ENCODE measurements at regions of chr1 and their contacts with region 1.

Region 1: GRCh38 chr1:152001391-152002249 is 8.0 kb upstream of the S100A10 start:
- DNase-seq: no peak
- ATAC-seq: peak; percentile 82
- H3K4me3 ChIP-seq: no peak overlapping the region
- H3K27ac ChIP-seq: no peak overlapping the region
- H3K4me1 ChIP-seq: no peaks in the 10 kb centered on the region
- H3K27me3 ChIP-seq: peaks cover 1 to 6% of the 10 kb centered on the region in 2 experiments
- CTCF ChIP-seq: peak; percentile 90 to 94 (median 90)
- EP300 ChIP-seq: no peak
- POLR2A ChIP-seq: no peak
- RAD21 ChIP-seq: peak; percentile 88

Region 2: DNA sequence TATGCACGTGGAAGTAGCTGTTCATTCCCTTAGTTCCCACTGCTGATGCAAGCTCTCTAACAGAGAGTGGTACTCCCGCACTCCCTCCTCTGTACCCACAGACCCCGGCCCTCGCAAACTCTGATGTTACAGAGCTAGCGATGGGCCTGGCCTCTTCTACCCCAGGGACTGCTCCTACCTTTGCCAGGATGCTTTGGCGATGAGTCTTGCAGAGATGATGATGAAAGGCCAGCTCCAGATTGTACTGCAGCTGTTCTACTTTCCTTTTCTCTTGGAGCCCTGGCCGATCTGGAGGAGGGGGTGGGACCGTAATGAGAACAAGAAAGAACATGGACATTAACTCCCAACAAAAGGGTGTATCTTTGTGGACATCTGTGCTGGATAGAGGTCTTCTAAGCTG is 190.5 kb before region 1 on chr1:
- CTCF ChIA-PET with region 1: no interaction called
- POLR2A ChIA-PET with region 1: no interaction called
- RAD21 ChIA-PET with region 1: no interaction called
- SMC1A ChIA-PET with region 1: no interaction called
- in situ Hi-C with region 1: no loop called
- intact Hi-C with region 1: no loop called
- DNase-seq: no peak
- ATAC-seq: no peak
- H3K4me3 ChIP-seq: no peak overlapping the region
- H3K27ac ChIP-seq: no peak overlapping the region
- H3K4me1 ChIP-seq: no peaks in the 10 kb centered on the region
- H3K27me3 ChIP-seq: peaks cover 0 to 4% of the 10 kb centered on the region in 2 experiments; a peak in 3 of 4 replicates
- CTCF ChIP-seq: no peak
- EP300 ChIP-seq: no peak
- POLR2A ChIP-seq: no peak
- RAD21 ChIP-seq: no peak

Region 3: DNA sequence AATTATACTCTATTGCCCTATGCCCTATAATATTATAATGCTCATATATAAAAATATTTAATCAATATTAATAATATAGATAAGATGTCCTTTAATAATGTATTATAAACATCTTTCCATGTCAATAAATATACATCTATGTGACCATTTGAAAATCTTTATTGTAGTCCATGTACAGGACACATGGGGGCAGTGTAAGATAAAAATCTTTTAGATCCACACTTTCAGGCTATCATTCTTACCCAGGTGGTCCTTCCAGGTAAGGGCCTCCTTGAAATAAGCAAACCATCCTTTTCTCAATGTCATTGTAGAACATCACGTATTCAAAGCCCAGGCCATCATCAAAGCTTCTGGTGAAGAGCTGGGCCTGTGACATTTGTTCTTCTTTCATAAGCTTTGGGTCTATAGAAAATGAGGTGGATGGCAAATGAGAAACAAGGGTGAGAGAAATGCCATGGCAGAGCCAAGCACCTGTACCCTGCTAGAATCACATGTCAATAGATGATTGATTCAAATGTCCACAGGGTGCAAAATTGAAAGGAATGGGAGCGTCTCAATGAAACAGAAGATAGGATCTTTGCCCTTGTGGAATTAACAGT is 112.5 kb before region 1 on chr1:
- CTCF ChIA-PET with region 1: interaction called, 34 read pairs
- POLR2A ChIA-PET with region 1: no interaction called
- RAD21 ChIA-PET with region 1: interaction called, 6 read pairs
- SMC1A ChIA-PET with region 1: interaction called, 47 read pairs
- in situ Hi-C with region 1: loop called (anchors 5 kb)
- intact Hi-C with region 1: loop called (anchors 1 kb)
- DNase-seq: no peak
- ATAC-seq: peak; percentile 61
- H3K4me3 ChIP-seq: no peak overlapping the region
- H3K27ac ChIP-seq: no peak overlapping the region
- H3K4me1 ChIP-seq: no peaks in the 10 kb centered on the region
- H3K27me3 ChIP-seq: no peaks in the 10 kb centered on the region
- CTCF ChIP-seq: peak; percentile 21 to 43 (median 42); a peak in 4 of 6 replicates
- EP300 ChIP-seq: no peak
- POLR2A ChIP-seq: no peak
- RAD21 ChIP-seq: peak; percentile 50

Region 4: GRCh38 chr1:151909150-151910149 is 92.2 kb before region 1 on chr1 and contains the start of gene THEM4:
- CTCF ChIA-PET with region 1: interaction called, 31 read pairs
- POLR2A ChIA-PET with region 1: no interaction called
- RAD21 ChIA-PET with region 1: interaction called, 8 read pairs
- SMC1A ChIA-PET with region 1: interaction called, 5 read pairs
- in situ Hi-C with region 1: no loop called
- intact Hi-C with region 1: no loop called
- DNase-seq: peak; percentile 79
- ATAC-seq: peak; percentile 99
- H3K4me3 ChIP-seq: peak within 1 kb of the TSS; percentile 84
- H3K27ac ChIP-seq: peak within 1 kb of the TSS; percentile 78
- H3K4me1 ChIP-seq: no peaks in the 10 kb centered on the region
- H3K27me3 ChIP-seq: no peaks in the 10 kb centered on the region
- CTCF ChIP-seq: peak; percentile 24 to 36 (median 33); a peak in 4 of 6 replicates
- EP300 ChIP-seq: no peak
- POLR2A ChIP-seq: peak; percentile 93
- RAD21 ChIP-seq: peak; percentile 37; the same call in 1 of the 2 replicates
- polyA plus RNA-seq, gene THEM4: 3.4 to 7.2 TPM

Region 5: GRCh38 chr1:151934048-151934493 is 67.5 kb before region 1 on chr1:
- CTCF ChIA-PET with region 1: interaction called, 122 read pairs
- POLR2A ChIA-PET with region 1: interaction called, 3 read pairs
- RAD21 ChIA-PET with region 1: interaction called, 33 read pairs
- SMC1A ChIA-PET with region 1: interaction called, 56 read pairs
- in situ Hi-C with region 1: loop called (anchors 5 kb)
- intact Hi-C with region 1: loop called (anchors 1 kb)
- DNase-seq: no peak
- ATAC-seq: peak; percentile 93
- H3K4me3 ChIP-seq: no peak overlapping the region
- H3K27ac ChIP-seq: no peak overlapping the region
- H3K4me1 ChIP-seq: peaks cover 8% of the 10 kb centered on the region
- H3K27me3 ChIP-seq: peaks cover 0 to 1% of the 10 kb centered on the region in 2 experiments; a peak in 1 of 4 replicates
- CTCF ChIP-seq: peak; percentile 79 to 87 (median 83)
- EP300 ChIP-seq: no peak
- POLR2A ChIP-seq: no peak
- RAD21 ChIP-seq: peak; percentile 88

Region 6: GRCh38 chr1:151945725-151946364 is 55.8 kb before region 1 on chr1:
- CTCF ChIA-PET with region 1: interaction called, 13 read pairs
- POLR2A ChIA-PET with region 1: no interaction called
- RAD21 ChIA-PET with region 1: no interaction called
- SMC1A ChIA-PET with region 1: no interaction called
- in situ Hi-C with region 1: no loop called
- intact Hi-C with region 1: no loop called
- DNase-seq: no peak
- ATAC-seq: peak; percentile 88
- H3K4me3 ChIP-seq: no peak overlapping the region
- H3K27ac ChIP-seq: no peak overlapping the region
- H3K4me1 ChIP-seq: no peaks in the 10 kb centered on the region
- H3K27me3 ChIP-seq: peaks cover 0 to 8% of the 10 kb centered on the region in 2 experiments; a peak in 2 of 4 replicates
- CTCF ChIP-seq: no peak
- EP300 ChIP-seq: peak in 1 of 2 experiments; percentile 14; a peak in 1 of 4 replicates
- POLR2A ChIP-seq: no peak
- RAD21 ChIP-seq: no peak

Region 7: DNA sequence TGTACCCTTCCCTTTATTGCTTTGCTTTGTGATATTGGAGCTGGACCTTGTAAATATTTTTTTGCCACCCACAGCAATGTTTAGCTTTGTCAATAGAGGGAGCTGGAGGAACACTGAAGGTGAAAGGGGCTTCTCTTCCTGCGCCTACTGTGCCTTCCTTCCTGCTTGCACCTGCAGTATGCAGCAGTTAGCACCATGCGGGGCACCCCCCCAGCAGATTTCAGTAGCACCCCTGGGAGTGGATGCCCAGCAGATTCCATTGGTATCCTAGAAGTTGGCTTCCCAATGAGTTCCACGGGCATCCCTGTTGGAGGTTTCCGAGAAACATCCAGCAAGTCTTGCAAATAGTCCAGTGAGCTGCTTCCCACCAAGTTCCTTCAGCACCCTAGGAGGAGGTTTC is 33.6 kb before region 1 on chr1:
- CTCF ChIA-PET with region 1: interaction called, 104 read pairs
- POLR2A ChIA-PET with region 1: no interaction called
- RAD21 ChIA-PET with region 1: interaction called, 26 read pairs
- SMC1A ChIA-PET with region 1: interaction called, 70 read pairs
- in situ Hi-C with region 1: no loop called
- intact Hi-C with region 1: loop called (anchors 2 kb)
- DNase-seq: no peak
- ATAC-seq: peak; percentile 84
- H3K4me3 ChIP-seq: no peak overlapping the region
- H3K27ac ChIP-seq: no peak overlapping the region
- H3K4me1 ChIP-seq: no peaks in the 10 kb centered on the region
- H3K27me3 ChIP-seq: 0 out of 4 replicates have a peak, but pooled peaks cover 2 to 5% of the 10 kb centered on the region in 2 experiments
- CTCF ChIP-seq: peak; percentile 66 to 80 (median 79)
- EP300 ChIP-seq: no peak
- POLR2A ChIP-seq: no peak
- RAD21 ChIP-seq: peak; percentile 88

Region 8: DNA sequence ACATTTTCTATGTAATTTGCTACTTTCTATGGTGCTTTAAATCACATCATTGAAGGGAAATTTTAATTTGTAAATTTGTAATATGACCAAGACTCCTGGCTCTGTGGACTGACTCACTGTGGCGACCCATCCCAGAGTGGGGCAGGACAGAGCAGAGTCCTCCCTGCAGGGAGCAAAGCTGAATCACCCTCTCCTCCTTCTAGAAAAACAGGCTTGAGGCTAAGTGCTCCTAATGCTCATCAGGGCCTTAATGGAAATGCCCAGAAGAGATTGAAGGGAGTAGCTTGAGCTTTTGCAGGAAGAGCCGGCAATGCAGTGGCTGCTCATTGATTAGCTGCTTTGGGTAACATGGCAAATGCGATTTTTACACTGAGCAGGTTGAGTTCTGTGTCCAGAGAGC is 24.8 kb before region 1 on chr1:
- CTCF ChIA-PET with region 1: interaction called, 104 read pairs
- POLR2A ChIA-PET with region 1: no interaction called
- RAD21 ChIA-PET with region 1: no interaction called
- SMC1A ChIA-PET with region 1: interaction called, 12 read pairs
- in situ Hi-C with region 1: no loop called
- intact Hi-C with region 1: no loop called
- DNase-seq: no peak
- ATAC-seq: no peak
- H3K4me3 ChIP-seq: no peak overlapping the region
- H3K27ac ChIP-seq: no peak overlapping the region
- H3K4me1 ChIP-seq: no peaks in the 10 kb centered on the region
- H3K27me3 ChIP-seq: peaks cover 0 to 9% of the 10 kb centered on the region in 2 experiments; a peak in 2 of 4 replicates
- CTCF ChIP-seq: no peak
- EP300 ChIP-seq: no peak
- POLR2A ChIP-seq: no peak
- RAD21 ChIP-seq: no peak

Measured in GM12878 (cell line).